Mucosa of descending colon (tissue), 3 donors: ENCODE measurements at regions of chr15 and their contacts with region 1.

Region 1: GRCh38 chr15:98421419-98422129 is 226.8 kb upstream of the IGF1R start:
- DNase-seq: peak in 2 of 3 donors; percentile 67 to 71
- ATAC-seq: peak; percentile 85
- H3K4me3 ChIP-seq: no peak overlapping the region
- H3K4me1 ChIP-seq: peaks cover 5% of the 10 kb centered on the region
- CTCF ChIP-seq: peak; percentile 96

Region 2: DNA sequence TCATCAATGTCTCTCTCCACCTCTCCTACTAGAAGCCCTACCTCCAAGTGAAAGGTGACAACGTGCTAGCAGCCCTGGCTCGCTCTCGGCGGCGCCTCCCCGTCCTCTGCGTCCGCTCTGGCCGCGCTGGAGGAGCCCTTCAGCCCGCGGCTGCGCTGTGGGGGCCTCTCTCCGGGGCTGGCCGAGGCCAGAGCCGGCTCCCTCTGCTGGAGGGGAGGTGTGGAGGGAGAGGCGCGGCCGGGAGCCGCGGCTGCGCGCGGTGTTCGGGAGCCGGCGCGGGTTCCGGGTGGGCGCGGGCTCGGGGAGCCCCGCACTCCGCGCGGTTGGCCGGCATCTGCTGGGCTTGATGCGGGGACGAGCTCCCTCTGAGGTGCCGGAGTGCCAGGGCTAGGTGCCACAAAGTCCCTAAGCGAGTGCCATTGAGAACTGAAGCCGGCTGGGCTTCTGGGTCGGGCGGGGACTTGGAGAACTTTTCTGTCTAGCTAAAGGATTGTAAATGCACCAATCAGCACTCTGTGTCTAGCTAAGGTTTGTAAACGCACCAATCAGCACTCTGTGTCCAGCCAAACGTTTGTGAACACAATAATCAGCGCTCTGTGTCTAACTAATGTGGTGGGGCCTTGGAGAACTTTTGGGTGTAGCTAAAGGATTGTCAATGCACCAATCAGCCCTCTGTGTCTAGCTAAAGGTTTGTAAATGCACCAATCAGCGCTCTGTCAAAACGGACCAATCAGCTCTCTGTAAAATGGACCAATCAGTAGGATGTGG is 545.9 kb before region 1 on chr15:
- intact Hi-C with region 1: no loop called
- DNase-seq: peak; percentile 22 to 65 (median 63)
- ATAC-seq: peak; percentile 86
- H3K4me3 ChIP-seq: no peak overlapping the region
- H3K4me1 ChIP-seq: no peaks in the 10 kb centered on the region
- CTCF ChIP-seq: no peak

Region 3: GRCh38 chr15:98311566-98312188 is 109.9 kb before region 1 on chr15:
- intact Hi-C with region 1: loop called (anchors 5 kb)
- DNase-seq: peak in 2 of 3 donors; percentile 45 to 95
- ATAC-seq: peak; percentile 55
- H3K4me3 ChIP-seq: no peak overlapping the region
- H3K4me1 ChIP-seq: no peaks in the 10 kb centered on the region
- CTCF ChIP-seq: peak; percentile 41